ENCODE measurements at regions of chr9 and their contacts with region 1.

Region 1: GRCh38 chr9:38119699-38120236 is 50.7 kb upstream of the SHB start:
- DNase-seq: peak in 1 of 2 experiments; percentile 35
- H3K4me3 ChIP-seq: no peak overlapping the region
- H3K27ac ChIP-seq: no peak overlapping the region
- H3K4me1 ChIP-seq: 0 out of 2 replicates have a peak, but pooled peaks cover 6% of the 10 kb centered on the region
- H3K27me3 ChIP-seq: no peaks in the 10 kb centered on the region
- CTCF ChIP-seq: no peak

Region 2: GRCh38 chr9:37927132-37927531 is 192.6 kb before region 1 on chr9:
- CTCF ChIA-PET with region 1: interaction called, 17 read pairs
- POLR2A ChIA-PET with region 1: no interaction called
- intact Hi-C with region 1: no loop called
- DNase-seq: no peak
- H3K4me3 ChIP-seq: no peak overlapping the region
- H3K27ac ChIP-seq: no peak overlapping the region
- H3K4me1 ChIP-seq: no peaks in the 10 kb centered on the region
- H3K27me3 ChIP-seq: no peaks in the 10 kb centered on the region
- CTCF ChIP-seq: no peak

Region 3: DNA sequence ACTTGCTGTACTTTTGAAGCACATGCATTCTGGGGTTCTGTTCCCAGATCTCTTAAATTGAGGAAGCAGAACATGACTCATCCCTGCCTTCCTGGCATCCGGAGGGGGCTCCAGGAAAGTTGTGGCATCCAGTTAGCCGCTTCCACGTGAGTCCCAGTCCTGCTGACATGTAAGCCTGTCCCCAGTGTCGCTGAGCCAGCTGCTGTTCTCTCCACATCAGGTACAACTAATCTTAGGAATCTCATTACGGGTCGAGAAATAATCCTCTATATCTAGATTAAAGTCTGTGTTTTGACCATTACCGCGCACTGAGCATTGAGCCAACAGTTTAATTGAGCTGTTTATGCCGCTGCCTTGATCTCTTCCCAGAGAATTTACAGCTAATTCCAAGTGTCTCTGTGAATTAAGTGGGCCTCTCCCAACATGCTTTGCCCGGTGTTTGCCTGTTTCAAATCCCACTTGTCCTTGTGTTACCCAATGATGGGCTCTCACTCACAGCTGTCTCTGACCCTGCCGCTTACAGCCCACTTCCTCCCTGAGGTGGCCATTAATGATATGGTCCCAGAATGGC is 40.2 kb before region 1 on chr9:
- CTCF ChIA-PET with region 1: no interaction called
- POLR2A ChIA-PET with region 1: no interaction called
- intact Hi-C with region 1: no loop called
- DNase-seq: no peak
- H3K4me3 ChIP-seq: no peak overlapping the region
- H3K27ac ChIP-seq: no peak overlapping the region
- H3K4me1 ChIP-seq: peaks cover 25% of the 10 kb centered on the region
- H3K27me3 ChIP-seq: no peaks in the 10 kb centered on the region
- CTCF ChIP-seq: no peak

Region 4: DNA sequence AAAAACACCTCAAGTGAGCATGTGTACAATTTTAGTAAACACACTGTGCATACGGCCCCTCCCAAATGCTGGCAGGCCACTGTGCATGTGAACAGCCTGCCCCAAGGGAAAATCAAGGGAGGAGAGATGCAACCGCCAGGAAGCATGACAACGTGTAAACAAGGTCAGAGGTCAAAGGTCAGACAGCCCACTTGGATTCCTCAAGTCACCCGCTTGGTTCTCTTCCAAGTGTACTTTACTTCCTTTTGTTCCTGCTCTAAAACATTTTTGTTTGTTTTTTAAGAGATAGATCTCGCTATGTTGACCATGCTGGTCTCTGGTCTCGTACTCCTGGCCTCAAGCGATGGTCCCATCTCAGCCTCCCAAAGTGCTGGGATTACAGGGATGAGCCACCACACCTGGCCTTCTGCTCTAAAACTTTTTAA is 76.0 kb after region 1 on chr9:
- CTCF ChIA-PET with region 1: no interaction called
- POLR2A ChIA-PET with region 1: no interaction called
- intact Hi-C with region 1: loop called (anchors 2 kb)
- DNase-seq: no peak
- H3K4me3 ChIP-seq: no peak overlapping the region
- H3K27ac ChIP-seq: no peak overlapping the region
- H3K4me1 ChIP-seq: no peaks in the 10 kb centered on the region
- H3K27me3 ChIP-seq: no peaks in the 10 kb centered on the region
- CTCF ChIP-seq: no peak